Caco-2 (cell line): ENCODE measurements at regions of chr1 and their contacts with region 1.

Region 1: GRCh38 chr1:162193815-162194214 is 124.3 kb downstream of the NOS1AP start:
- DNase-seq: no peak
- H3K4me3 ChIP-seq: no peak overlapping the region
- H3K4me3 Mint-ChIP-seq: no peak overlapping the region
- H3K27ac Mint-ChIP-seq: no peak overlapping the region
- H3K4me1 ChIP-seq: peaks cover 69% of the 10 kb centered on the region
- H3K4me1 Mint-ChIP-seq: peaks cover 26% of the 10 kb centered on the region
- H3K27me3 ChIP-seq: no peaks in the 10 kb centered on the region
- H3K27me3 Mint-ChIP-seq: no peaks in the 10 kb centered on the region
- CTCF ChIP-seq: no peak

Region 2: GRCh38 chr1:162117039-162117774 is 76.6 kb before region 1 on chr1:
- CTCF ChIA-PET with region 1: no interaction called
- POLR2A ChIA-PET with region 1: no interaction called
- intact Hi-C with region 1: no loop called
- DNase-seq: no peak
- H3K4me3 ChIP-seq: no peak overlapping the region
- H3K4me3 Mint-ChIP-seq: no peak overlapping the region
- H3K27ac Mint-ChIP-seq: no peak overlapping the region
- H3K4me1 ChIP-seq: peaks cover 2% of the 10 kb centered on the region; the same call in 1 of the 2 replicates
- H3K4me1 Mint-ChIP-seq: no peaks in the 10 kb centered on the region
- H3K27me3 ChIP-seq: no peaks in the 10 kb centered on the region
- H3K27me3 Mint-ChIP-seq: no peaks in the 10 kb centered on the region
- CTCF ChIP-seq: no peak

Region 3: GRCh38 chr1:162153374-162153773 is 40.4 kb before region 1 on chr1:
- CTCF ChIA-PET with region 1: no interaction called
- POLR2A ChIA-PET with region 1: no interaction called
- intact Hi-C with region 1: no loop called
- DNase-seq: no peak
- H3K4me3 ChIP-seq: no peak overlapping the region
- H3K4me3 Mint-ChIP-seq: no peak overlapping the region
- H3K27ac Mint-ChIP-seq: no peak overlapping the region
- H3K4me1 ChIP-seq: peaks cover 6% of the 10 kb centered on the region; the same call in 1 of the 2 replicates
- H3K4me1 Mint-ChIP-seq: peaks cover 4% of the 10 kb centered on the region
- H3K27me3 ChIP-seq: no peaks in the 10 kb centered on the region
- H3K27me3 Mint-ChIP-seq: no peaks in the 10 kb centered on the region
- CTCF ChIP-seq: no peak

Region 4: DNA sequence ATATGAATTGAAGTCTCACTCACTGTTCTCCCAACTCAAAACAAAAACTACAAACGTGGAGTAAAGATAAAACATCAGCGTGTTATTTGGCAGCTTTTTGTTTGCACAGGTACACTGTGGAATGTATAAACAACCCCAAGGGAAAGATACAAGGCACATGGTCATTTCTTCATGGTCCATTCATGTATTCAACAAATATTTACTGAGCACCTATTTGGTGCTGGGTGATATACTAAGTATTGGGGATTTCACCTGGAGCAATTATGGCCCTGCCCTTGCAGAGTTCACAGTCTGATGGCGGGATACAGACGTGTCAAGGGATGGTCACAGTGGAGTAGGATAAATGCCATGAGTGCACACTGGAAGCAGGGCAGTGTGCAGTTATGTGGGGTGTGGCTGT is 46.8 kb after region 1 on chr1:
- CTCF ChIA-PET with region 1: no interaction called
- POLR2A ChIA-PET with region 1: no interaction called
- intact Hi-C with region 1: loop called (anchors 5 kb)
- DNase-seq: peak; percentile 16 to 41
- H3K4me3 ChIP-seq: no peak overlapping the region
- H3K4me3 Mint-ChIP-seq: no peak overlapping the region
- H3K27ac Mint-ChIP-seq: no peak overlapping the region
- H3K4me1 ChIP-seq: 0 out of 2 replicates have a peak, but pooled peaks cover 3% of the 10 kb centered on the region
- H3K4me1 Mint-ChIP-seq: peaks cover 25% of the 10 kb centered on the region
- H3K27me3 ChIP-seq: no peaks in the 10 kb centered on the region
- H3K27me3 Mint-ChIP-seq: no peaks in the 10 kb centered on the region
- CTCF ChIP-seq: no peak